HEK293 (cell line): ENCODE measurements at regions of chr19 and their contacts with region 1.

Region 1: GRCh38 chr19:39417463-39418181 is 5.2 kb downstream of the PLEKHG2 start:
- H3K4me3 ChIP-seq: no peak overlapping the region
- H3K27ac ChIP-seq: no peak overlapping the region
- H3K4me1 ChIP-seq: peaks cover 6% of the 10 kb centered on the region
- CTCF ChIP-seq: no peak

Region 2: DNA sequence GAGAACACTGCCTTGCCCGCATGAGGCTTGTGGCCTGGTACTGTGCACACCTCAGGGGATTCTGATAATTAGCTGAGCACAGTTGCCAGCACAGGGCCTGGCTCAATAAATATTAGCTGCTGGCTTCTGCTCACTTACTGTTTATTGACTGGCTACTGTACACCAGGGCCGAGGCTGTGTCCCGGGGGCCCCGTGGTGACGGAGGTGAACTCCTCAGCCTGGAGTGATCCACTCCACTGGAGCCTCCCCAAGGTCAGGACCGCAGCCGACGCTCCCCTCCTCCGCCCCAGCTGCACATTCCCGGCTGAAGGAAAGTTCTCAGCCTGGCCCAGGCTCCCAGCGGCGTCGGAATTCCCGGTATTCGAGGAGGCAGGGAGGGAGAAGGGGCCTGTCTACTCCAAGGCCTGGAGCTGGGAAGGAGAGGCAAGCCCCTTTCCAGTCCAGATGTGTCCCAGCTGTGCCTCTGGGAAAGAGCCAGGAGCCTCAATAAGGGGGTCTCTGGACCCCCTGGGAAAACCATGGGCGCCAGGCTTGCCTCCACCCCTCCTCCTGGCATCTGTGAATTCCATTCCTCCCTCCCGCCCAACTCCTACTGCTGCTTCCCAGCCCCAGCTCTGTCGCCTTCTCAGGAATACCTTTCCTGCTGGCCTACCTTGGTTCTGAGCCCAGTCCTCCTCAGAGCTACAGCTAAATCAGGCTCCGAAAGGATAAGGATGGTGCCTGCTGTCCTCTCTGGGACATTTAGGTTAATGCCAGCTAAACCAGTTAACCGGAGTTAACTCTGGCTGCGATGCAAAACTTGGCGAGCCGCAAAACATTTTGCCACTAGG is 10.9 kb after region 1 on chr19:
- CTCF ChIA-PET with region 1: interaction called, 16 read pairs
- POLR2A ChIA-PET with region 1: interaction called, 31 read pairs
- H3K4me3 ChIP-seq: no peak overlapping the region
- H3K27ac ChIP-seq: peak overlapping the region; percentile 40; the same call in 1 of the 2 replicates
- H3K4me1 ChIP-seq: peaks cover 10% of the 10 kb centered on the region
- CTCF ChIP-seq: no peak; the same call in 1 of the 2 replicates